T-cell (primary cell): ENCODE measurements at regions of chr13 and their contacts with region 1.

Region 1: DNA sequence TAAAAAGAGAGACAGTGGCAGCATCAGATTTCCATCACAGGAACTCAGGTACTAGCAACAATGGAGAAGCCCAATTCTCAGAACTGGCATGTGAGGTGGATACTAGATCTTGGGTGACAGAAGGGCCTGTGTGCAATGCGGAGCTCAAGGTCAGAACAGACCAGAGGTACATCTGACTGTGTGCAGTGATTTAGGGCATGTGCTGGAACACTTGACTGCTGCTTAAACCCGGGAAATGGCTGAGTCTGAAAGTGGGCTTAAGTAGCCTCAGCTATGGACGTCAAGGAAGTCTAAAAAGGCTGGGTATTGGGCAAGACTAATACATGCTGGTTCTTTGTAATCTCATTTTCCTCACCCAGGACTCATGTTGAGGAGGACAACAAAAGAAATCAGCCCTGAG is 182.2 kb downstream of the LACC1 start:
- DNase-seq: no peak
- ATAC-seq: no peak
- H3K4me3 ChIP-seq: no peak overlapping the region
- H3K4me3 Mint-ChIP-seq: no peak overlapping the region
- H3K27ac ChIP-seq: no peak overlapping the region
- H3K27ac Mint-ChIP-seq: no peak overlapping the region
- H3K4me1 ChIP-seq: no peaks in the 10 kb centered on the region
- H3K4me1 Mint-ChIP-seq: no peaks in the 10 kb centered on the region
- H3K27me3 ChIP-seq: no peaks in the 10 kb centered on the region
- H3K27me3 Mint-ChIP-seq: peaks cover 0 to 13% of the 10 kb centered on the region in 2 donors

Region 2: GRCh38 chr13:44274452-44275205 is 212.8 kb after region 1 on chr13:
- CTCF ChIA-PET with region 1: no interaction called
- POLR2A ChIA-PET with region 1: interaction called in 1 of 2 experiments, 10 read pairs
- DNase-seq: peak in 29 of 35 experiments; percentile 8 to 85 (median 35)
- ATAC-seq: peak; percentile 89 to 95 (median 92)
- H3K4me3 ChIP-seq: peak overlapping the region; percentile 26 to 43
- H3K4me3 Mint-ChIP-seq: peak overlapping the region; percentile 56 to 75 (median 68)
- H3K27ac ChIP-seq: peak overlapping the region; percentile 95
- H3K27ac Mint-ChIP-seq: peak overlapping the region; percentile 94 to 95
- H3K4me1 ChIP-seq: peaks cover 20% of the 10 kb centered on the region in 2 experiments
- H3K4me1 Mint-ChIP-seq: peaks cover 49 to 53% (median 50%) of the 10 kb centered on the region in 3 donors
- H3K27me3 ChIP-seq: peaks cover 0 to 3% of the 10 kb centered on the region in 2 experiments
- H3K27me3 Mint-ChIP-seq: peaks cover 0 to 1% of the 10 kb centered on the region in 2 donors